Activated B cell treated with CpG ODN at 0.5 μM for 24 hours (primary cell): ENCODE measurements at regions of chr1 and their contacts with region 1.

Region 1: DNA sequence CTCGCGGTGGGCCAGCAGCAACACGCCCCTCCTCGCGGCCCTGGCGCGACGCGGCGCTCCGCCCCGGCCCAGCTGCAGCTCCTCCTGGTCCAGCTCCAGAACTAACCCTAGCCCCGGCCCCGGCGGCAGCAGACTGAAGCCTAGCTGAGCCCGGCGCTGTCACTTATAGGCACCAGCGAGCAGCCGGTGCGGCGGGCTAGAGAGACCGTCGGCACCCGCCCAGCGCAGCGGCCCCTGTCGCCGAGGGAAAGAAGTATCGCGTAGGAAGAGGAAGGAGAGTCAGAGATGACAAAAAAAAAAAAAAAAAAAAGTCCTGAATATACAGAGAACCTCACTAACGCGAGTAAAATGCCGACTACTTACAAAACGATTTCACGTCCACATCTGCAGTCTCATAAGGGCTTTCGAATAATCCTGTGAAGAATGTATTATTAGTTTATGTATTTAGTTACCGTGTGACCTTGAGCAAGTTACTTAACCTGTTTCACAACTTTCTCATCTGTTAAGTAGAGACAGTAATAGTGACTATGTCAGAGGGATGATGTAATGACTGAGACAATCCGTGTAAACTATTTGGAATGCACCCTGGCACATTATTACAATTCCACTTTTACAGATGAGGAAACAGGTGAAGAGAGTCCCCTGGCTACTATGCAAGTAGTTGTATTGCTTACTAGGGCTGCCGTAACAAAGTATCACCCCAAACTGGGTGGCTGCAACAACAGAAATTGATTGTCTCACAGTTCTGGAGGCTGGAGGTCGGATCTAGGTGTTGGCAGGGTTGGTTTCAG is at the start of gene SLC9A1:
- DNase-seq: peak; percentile 94
- ATAC-seq: peak; percentile 95
- H3K4me3 Mint-ChIP-seq: peak within 1 kb of the TSS; percentile 86
- H3K27ac Mint-ChIP-seq: peak within 1 kb of the TSS; percentile 98
- H3K4me1 Mint-ChIP-seq: peaks cover 48% of the 10 kb centered on the region
- H3K27me3 Mint-ChIP-seq: no peaks in the 10 kb centered on the region
- CTCF ChIP-seq: peak; percentile 22
- total RNA-seq, gene SLC9A1: 12.2 and 13.6 TPM in 2 replicates

Region 2: DNA sequence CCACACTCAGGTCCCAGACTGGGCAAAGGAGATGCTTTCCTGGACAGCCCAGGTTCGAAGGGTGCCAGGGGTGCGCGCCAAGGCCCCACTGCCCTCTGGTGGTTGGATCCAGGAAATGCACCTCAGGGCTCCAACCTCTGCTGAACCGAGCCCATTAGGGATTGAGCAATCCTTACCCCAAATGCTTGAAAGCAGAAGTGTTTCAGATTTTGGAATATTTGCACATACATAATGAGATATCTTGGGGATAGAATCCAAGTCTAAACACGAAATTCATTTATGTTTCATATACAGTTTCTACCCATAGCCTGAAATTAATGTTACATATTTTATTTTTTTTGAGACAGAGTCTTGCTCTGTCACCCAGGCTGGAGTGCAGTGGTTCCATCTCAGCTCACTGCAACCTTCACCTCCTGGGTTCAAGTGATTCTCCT is 57.7 kb before region 1 on chr1:
- CTCF ChIA-PET with region 1: no interaction called
- POLR2A ChIA-PET with region 1: interaction called, 10 read pairs
- intact Hi-C with region 1: no loop called
- DNase-seq: peak; percentile 61
- ATAC-seq: peak; percentile 40
- H3K4me3 Mint-ChIP-seq: no peak overlapping the region
- H3K27ac Mint-ChIP-seq: no peak overlapping the region
- H3K4me1 Mint-ChIP-seq: peaks cover 22% of the 10 kb centered on the region
- H3K27me3 Mint-ChIP-seq: no peaks in the 10 kb centered on the region
- CTCF ChIP-seq: peak; percentile 72

Region 3: GRCh38 chr1:27111626-27112573 is 43.3 kb before region 1 on chr1:
- CTCF ChIA-PET with region 1: interaction called, 20 read pairs
- POLR2A ChIA-PET with region 1: interaction called, 15 read pairs
- intact Hi-C with region 1: loop called (anchors 2 kb)
- DNase-seq: no peak
- ATAC-seq: peak; percentile 97
- H3K4me3 Mint-ChIP-seq: peak overlapping the region; percentile 48
- H3K27ac Mint-ChIP-seq: peak overlapping the region; percentile 80
- H3K4me1 Mint-ChIP-seq: peaks cover 24% of the 10 kb centered on the region
- H3K27me3 Mint-ChIP-seq: no peaks in the 10 kb centered on the region
- CTCF ChIP-seq: no peak

Region 4: GRCh38 chr1:27234049-27234882 is 79.1 kb after region 1 on chr1 and contains the start of gene WDTC1:
- CTCF ChIA-PET with region 1: no interaction called
- POLR2A ChIA-PET with region 1: interaction called, 13 read pairs
- intact Hi-C with region 1: loop called (anchors 2 kb)
- DNase-seq: peak; percentile 94
- ATAC-seq: peak; percentile 91
- H3K4me3 Mint-ChIP-seq: peak within 1 kb of the TSS; percentile 98
- H3K27ac Mint-ChIP-seq: peak within 1 kb of the TSS; percentile 90
- H3K4me1 Mint-ChIP-seq: peaks cover 30% of the 10 kb centered on the region
- H3K27me3 Mint-ChIP-seq: no peaks in the 10 kb centered on the region
- CTCF ChIP-seq: no peak
- total RNA-seq, gene WDTC1: 62.8 and 65.1 TPM in 2 replicates

Region 5: GRCh38 chr1:27321813-27322577 is 166.8 kb after region 1 on chr1 and contains the start of gene TMEM222:
- CTCF ChIA-PET with region 1: no interaction called
- POLR2A ChIA-PET with region 1: interaction called, 11 read pairs
- intact Hi-C with region 1: loop called (anchors 1 kb)
- DNase-seq: peak; percentile 99
- ATAC-seq: peak; percentile 95
- H3K4me3 Mint-ChIP-seq: peak within 1 kb of the TSS; percentile 97
- H3K27ac Mint-ChIP-seq: peak within 1 kb of the TSS; percentile 93
- H3K4me1 Mint-ChIP-seq: peaks cover 51% of the 10 kb centered on the region
- H3K27me3 Mint-ChIP-seq: no peaks in the 10 kb centered on the region
- CTCF ChIP-seq: no peak
- total RNA-seq, gene TMEM222: 39.3 and 43.0 TPM in 2 replicates